ENCODE measurements at regions of chr7 and their contacts with region 1.

Region 1: GRCh38 chr7:29606287-29606721 is 42.7 kb downstream of the PRR15 start:
- DNase-seq: no peak
- ATAC-seq: peak in 3 of 4 donors; percentile 71 to 83 (median 72)
- H3K4me3 ChIP-seq: no peak overlapping the region
- H3K27ac ChIP-seq: no peak overlapping the region
- H3K4me1 ChIP-seq: peaks cover 0 to 9% (median 0%) of the 10 kb centered on the region in 12 donors
- H3K27me3 ChIP-seq: peaks cover 0 to 4% (median 0%) of the 10 kb centered on the region in 9 donors
- CTCF ChIP-seq: no peak
- POLR2A ChIP-seq: no peak

Region 2: GRCh38 chr7:29574659-29575058 is 31.6 kb before region 1 on chr7:
- intact Hi-C with region 1: loop called in 1 of 10 experiments (anchors 2 kb)
- DNase-seq: no peak
- ATAC-seq: no peak
- H3K4me3 ChIP-seq: no peak overlapping the region
- H3K27ac ChIP-seq: no peak overlapping the region
- H3K4me1 ChIP-seq: no peaks in the 10 kb centered on the region
- H3K27me3 ChIP-seq: peaks cover 0 to 5% (median 0%) of the 10 kb centered on the region in 9 donors
- CTCF ChIP-seq: no peak
- POLR2A ChIP-seq: no peak

Region 3: DNA sequence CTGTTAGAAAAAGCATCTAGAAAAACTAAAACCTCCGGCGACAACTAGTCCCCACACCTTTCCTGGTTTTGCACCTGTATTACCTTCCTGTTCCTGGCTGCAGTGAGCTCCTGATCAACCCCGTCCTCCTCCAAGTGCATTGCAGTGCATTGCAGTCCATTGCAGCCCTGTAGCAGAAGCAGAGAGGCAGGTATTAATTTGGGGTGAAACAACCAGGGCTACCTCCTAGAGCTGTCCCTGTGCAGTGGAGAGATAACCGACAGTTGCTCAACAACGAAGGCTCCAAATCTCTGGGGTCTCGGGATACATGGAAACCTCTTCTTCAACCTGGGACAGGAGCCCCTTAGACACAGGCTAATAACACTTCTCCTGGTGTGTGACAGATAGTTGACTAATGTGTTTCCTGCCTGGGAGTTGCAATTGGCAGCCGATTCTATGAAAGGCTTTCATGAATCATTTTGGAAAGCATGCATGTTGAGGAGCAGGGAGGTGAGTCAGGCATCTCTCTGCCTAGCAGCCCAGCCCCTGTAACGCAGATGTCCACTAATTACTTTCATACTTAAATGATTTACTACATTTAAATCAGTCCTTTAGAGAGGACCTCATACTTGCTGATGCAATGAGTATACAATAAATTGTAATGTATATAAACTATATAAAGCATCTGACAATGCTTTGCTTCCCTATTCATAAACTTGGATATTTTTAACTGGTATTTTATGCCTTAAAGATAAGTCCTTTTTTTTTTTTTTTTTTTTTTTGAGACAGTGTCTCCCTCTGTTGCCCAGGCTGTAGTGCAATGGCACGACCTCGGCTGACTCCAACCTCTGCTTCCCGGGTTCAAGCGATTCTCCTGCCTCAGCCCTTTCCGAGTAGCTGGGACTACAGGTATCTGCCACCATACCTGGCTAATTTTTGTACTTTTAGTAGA is 16.3 kb after region 1 on chr7:
- intact Hi-C with region 1: no loop called
- DNase-seq: no peak
- ATAC-seq: peak in 3 of 4 donors; percentile 30 to 62 (median 50)
- H3K4me3 ChIP-seq: no peak overlapping the region
- H3K27ac ChIP-seq: no peak overlapping the region
- H3K4me1 ChIP-seq: no peaks in the 10 kb centered on the region
- H3K27me3 ChIP-seq: peaks cover 0 to 9% (median 0%) of the 10 kb centered on the region in 9 donors
- CTCF ChIP-seq: no peak
- POLR2A ChIP-seq: no peak

Region 4: DNA sequence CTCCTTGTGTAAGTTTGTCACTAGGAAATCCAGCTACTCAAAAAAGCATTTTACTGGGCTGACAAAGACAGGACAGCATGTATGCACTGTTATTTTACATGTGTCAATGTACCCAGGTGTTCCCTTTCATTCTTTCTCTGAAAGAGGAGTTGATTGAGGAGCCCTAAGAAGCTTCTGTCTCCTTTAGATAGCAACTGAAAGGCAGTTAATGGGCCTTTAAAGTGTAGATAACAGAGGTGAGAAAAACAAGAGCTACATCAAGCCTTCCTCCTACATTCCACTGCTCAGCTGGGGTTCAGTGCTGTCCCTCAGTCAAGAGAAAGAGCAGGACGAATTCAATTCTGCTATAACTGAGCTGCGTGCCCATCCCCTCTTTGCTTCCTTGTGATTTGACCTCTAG is 187.2 kb after region 1 on chr7:
- intact Hi-C with region 1: no loop called
- DNase-seq: no peak
- ATAC-seq: no peak
- H3K4me3 ChIP-seq: no peak overlapping the region
- H3K27ac ChIP-seq: no peak overlapping the region
- H3K4me1 ChIP-seq: no peaks in the 10 kb centered on the region
- H3K27me3 ChIP-seq: no peaks in the 10 kb centered on the region
- CTCF ChIP-seq: no peak
- POLR2A ChIP-seq: no peak